ENCODE measurements at regions of chr4 and their contacts with region 1.

Region 1: DNA sequence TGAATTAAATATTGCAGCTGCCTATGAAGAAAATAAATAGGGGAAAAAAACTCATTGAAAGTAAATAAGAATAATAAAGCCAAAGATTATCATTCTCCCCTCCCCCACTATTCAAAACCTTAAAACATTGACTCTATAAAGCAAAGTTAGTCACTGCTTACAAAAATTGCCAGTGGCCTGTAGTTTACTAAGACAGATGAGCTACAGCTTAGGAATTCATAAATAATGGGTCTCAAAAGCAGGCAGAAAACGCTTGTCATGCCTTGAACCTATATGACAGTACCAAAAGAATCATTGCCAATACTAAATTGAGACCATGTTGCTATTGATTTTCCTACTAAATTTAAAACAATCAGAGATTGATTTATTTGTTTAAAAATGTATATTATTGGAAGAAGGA is 78.9 kb downstream of the SLC10A7 start:
- DNase-seq: no peak
- ATAC-seq: no peak
- H3K4me3 ChIP-seq: no peak overlapping the region
- H3K4me3 Mint-ChIP-seq: no peak overlapping the region
- H3K27ac ChIP-seq: no peak overlapping the region
- H3K27ac Mint-ChIP-seq: no peak overlapping the region
- H3K4me1 ChIP-seq: no peaks in the 10 kb centered on the region
- H3K4me1 Mint-ChIP-seq: no peaks in the 10 kb centered on the region
- H3K27me3 ChIP-seq: no peaks in the 10 kb centered on the region
- H3K27me3 Mint-ChIP-seq: no peaks in the 10 kb centered on the region
- CTCF ChIP-seq: no peak

Region 2: GRCh38 chr4:146415829-146416228 is 27.0 kb before region 1 on chr4:
- CTCF ChIA-PET with region 1: interaction called, 3 read pairs
- POLR2A ChIA-PET with region 1: interaction called, 3 read pairs
- intact Hi-C with region 1: loop called in 1 of 2 experiments (anchors 1 kb)
- DNase-seq: no peak
- ATAC-seq: no peak
- H3K4me3 ChIP-seq: no peak overlapping the region
- H3K4me3 Mint-ChIP-seq: no peak overlapping the region
- H3K27ac ChIP-seq: no peak overlapping the region
- H3K27ac Mint-ChIP-seq: no peak overlapping the region
- H3K4me1 ChIP-seq: no peaks in the 10 kb centered on the region
- H3K4me1 Mint-ChIP-seq: no peaks in the 10 kb centered on the region
- H3K27me3 ChIP-seq: no peaks in the 10 kb centered on the region
- H3K27me3 Mint-ChIP-seq: no peaks in the 10 kb centered on the region
- CTCF ChIP-seq: no peak

Region 3: DNA sequence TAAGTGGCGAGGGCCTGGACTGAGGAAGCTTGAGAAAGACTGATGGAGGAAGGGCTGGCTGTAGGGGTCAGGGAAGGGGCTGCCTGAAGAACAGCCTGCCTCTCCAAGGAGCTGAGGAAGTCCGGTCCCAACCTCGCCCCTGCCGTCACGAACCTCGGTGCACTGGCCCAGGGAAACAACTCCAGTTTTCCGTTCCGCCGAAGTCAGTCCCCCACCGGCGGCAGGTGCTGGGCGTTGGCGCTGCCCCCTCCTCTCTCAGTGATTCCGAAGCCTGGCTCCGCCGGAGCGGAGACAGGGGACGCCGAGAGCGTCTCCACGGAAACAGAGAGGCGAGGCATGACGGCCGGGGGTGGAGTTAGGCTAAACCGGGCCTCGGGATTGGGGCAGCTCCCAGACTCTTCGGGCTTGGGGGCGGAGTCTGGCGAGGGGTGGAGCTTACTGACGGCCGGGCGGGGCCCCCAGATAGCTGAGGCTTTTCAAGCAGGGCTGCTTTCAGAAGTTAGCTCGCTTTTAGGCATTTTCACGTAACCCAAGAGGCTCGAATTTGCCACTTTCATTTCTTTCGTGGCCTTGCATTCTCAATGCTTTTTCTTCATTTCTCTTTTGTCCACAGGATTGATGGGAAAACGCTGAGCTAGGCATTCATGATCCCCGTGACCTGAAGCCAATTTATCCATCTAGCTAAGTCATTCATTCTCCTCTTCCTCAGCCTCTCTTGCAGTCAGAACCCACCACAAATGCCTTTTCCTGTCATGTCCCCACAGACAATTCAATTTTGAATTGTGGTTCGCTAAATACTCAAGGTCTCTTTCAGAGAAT is 503.0 kb after region 1 on chr4 and contains the start of gene TTC29:
- CTCF ChIA-PET with region 1: no interaction called
- POLR2A ChIA-PET with region 1: no interaction called
- intact Hi-C with region 1: no loop called
- DNase-seq: peak; percentile 61 to 90 (median 80)
- ATAC-seq: peak; percentile 99
- H3K4me3 ChIP-seq: peak within 1 kb of the TSS; percentile 49
- H3K4me3 Mint-ChIP-seq: peak within 1 kb of the TSS; percentile 80
- H3K27ac ChIP-seq: no peak within 1 kb of the TSS
- H3K27ac Mint-ChIP-seq: no peak within 1 kb of the TSS
- H3K4me1 ChIP-seq: peaks cover 19% of the 10 kb centered on the region
- H3K4me1 Mint-ChIP-seq: peaks cover 32% of the 10 kb centered on the region
- H3K27me3 ChIP-seq: no peaks in the 10 kb centered on the region
- H3K27me3 Mint-ChIP-seq: no peaks in the 10 kb centered on the region
- CTCF ChIP-seq: no peak
- total RNA-seq, gene TTC29: not detected

Measured in CD4-positive, alpha-beta T cell (primary cell).